ENCODE measurements at regions of chr4 and their contacts with region 1.

Region 1: GRCh38 chr4:146333187-146333894 is 119.0 kb downstream of the REELD1 start:
- DNase-seq: peak; percentile 62
- H3K4me3 ChIP-seq: no peak overlapping the region
- H3K27ac ChIP-seq: no peak overlapping the region
- H3K4me1 ChIP-seq: peaks cover 52% of the 10 kb centered on the region
- H3K27me3 ChIP-seq: no peaks in the 10 kb centered on the region
- CTCF ChIP-seq: no peak

Region 2: GRCh38 chr4:146465628-146466027 is 132.3 kb after region 1 on chr4:
- CTCF ChIA-PET with region 1: no interaction called
- dilution Hi-C with region 1: no loop called
- in situ Hi-C with region 1: no loop called
- intact Hi-C with region 1: no loop called
- DNase-seq: no peak
- H3K4me3 ChIP-seq: no peak overlapping the region
- H3K27ac ChIP-seq: no peak overlapping the region
- H3K4me1 ChIP-seq: peaks cover 12% of the 10 kb centered on the region
- H3K27me3 ChIP-seq: no peaks in the 10 kb centered on the region
- CTCF ChIP-seq: no peak

Region 3: GRCh38 chr4:147596981-147597380 is 1263.6 kb after region 1 on chr4:
- CTCF ChIA-PET with region 1: no interaction called
- dilution Hi-C with region 1: no loop called
- in situ Hi-C with region 1: no loop called
- intact Hi-C with region 1: loop called (anchors 10 kb)
- DNase-seq: peak; percentile 64
- H3K4me3 ChIP-seq: no peak overlapping the region
- H3K27ac ChIP-seq: no peak overlapping the region
- H3K4me1 ChIP-seq: peaks cover 19% of the 10 kb centered on the region
- H3K27me3 ChIP-seq: no peaks in the 10 kb centered on the region
- CTCF ChIP-seq: no peak